Activated B cell treated with CpG ODN at 0.5 μM for 24 hours (primary cell): ENCODE measurements at regions of chr15 and their contacts with region 1.

Region 1: DNA sequence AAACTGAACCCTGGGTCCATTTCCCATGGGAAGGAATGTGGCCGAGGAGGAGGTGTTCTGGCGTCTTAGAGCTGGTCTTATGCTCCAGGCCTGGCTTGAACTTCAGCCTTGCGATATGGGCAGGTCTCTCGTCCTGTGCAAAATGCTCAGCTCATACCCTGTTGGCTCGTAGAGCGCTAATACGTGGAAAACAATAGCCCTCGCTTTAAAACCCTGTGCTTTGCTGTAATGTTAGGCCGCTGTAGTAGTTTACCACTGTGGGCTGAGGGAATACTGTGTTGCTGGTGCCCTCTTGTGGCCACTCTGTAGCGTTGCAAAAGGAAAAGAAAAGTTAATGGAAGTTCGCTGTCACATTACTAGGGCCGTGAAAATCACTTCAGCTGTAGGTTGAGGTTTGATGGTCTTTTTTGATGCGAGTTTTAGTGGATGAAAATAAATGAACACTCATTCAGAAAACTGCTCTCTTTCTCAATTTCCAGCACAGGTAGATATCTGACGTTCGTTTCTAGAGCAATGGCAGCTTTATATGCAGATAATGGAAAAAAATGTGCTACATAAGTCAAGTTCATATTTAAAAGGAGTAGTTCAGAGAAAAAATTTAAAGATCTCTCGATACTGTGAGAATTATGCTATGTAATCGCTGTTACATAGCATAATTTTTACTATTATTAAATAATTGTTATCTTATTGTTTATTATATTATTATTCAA is 92.9 kb downstream of the MCTP2 start:
- DNase-seq: peak; percentile 44
- ATAC-seq: peak; percentile 92
- H3K4me3 Mint-ChIP-seq: no peak overlapping the region
- H3K27ac Mint-ChIP-seq: peak overlapping the region; percentile 25
- H3K4me1 Mint-ChIP-seq: peaks cover 19% of the 10 kb centered on the region
- H3K27me3 Mint-ChIP-seq: no peaks in the 10 kb centered on the region
- CTCF ChIP-seq: peak; percentile 75

Region 2: GRCh38 chr15:93030430-93031105 is 1293.7 kb before region 1 on chr15:
- CTCF ChIA-PET with region 1: interaction called, 4 read pairs
- POLR2A ChIA-PET with region 1: no interaction called
- intact Hi-C with region 1: loop called (anchors 10 kb)
- DNase-seq: no peak
- ATAC-seq: peak; percentile 89
- H3K4me3 Mint-ChIP-seq: no peak overlapping the region
- H3K27ac Mint-ChIP-seq: no peak overlapping the region
- H3K4me1 Mint-ChIP-seq: peaks cover 10% of the 10 kb centered on the region
- H3K27me3 Mint-ChIP-seq: no peaks in the 10 kb centered on the region
- CTCF ChIP-seq: peak; percentile 41

Region 3: GRCh38 chr15:93997084-93997918 is 327.0 kb before region 1 on chr15:
- CTCF ChIA-PET with region 1: interaction called, 12 read pairs
- POLR2A ChIA-PET with region 1: no interaction called
- intact Hi-C with region 1: loop called (anchors 1 kb)
- DNase-seq: no peak
- ATAC-seq: no peak
- H3K4me3 Mint-ChIP-seq: no peak overlapping the region
- H3K27ac Mint-ChIP-seq: no peak overlapping the region
- H3K4me1 Mint-ChIP-seq: no peaks in the 10 kb centered on the region
- H3K27me3 Mint-ChIP-seq: no peaks in the 10 kb centered on the region
- CTCF ChIP-seq: peak; percentile 69

Region 4: GRCh38 chr15:94238539-94239118 is 85.6 kb before region 1 on chr15:
- CTCF ChIA-PET with region 1: interaction called, 66 read pairs
- POLR2A ChIA-PET with region 1: interaction called, 5 read pairs
- intact Hi-C with region 1: no loop called
- DNase-seq: no peak
- ATAC-seq: peak; percentile 83
- H3K4me3 Mint-ChIP-seq: peak overlapping the region; percentile 52
- H3K27ac Mint-ChIP-seq: peak overlapping the region; percentile 86
- H3K4me1 Mint-ChIP-seq: peaks cover 80% of the 10 kb centered on the region
- H3K27me3 Mint-ChIP-seq: no peaks in the 10 kb centered on the region
- CTCF ChIP-seq: no peak

Region 5: DNA sequence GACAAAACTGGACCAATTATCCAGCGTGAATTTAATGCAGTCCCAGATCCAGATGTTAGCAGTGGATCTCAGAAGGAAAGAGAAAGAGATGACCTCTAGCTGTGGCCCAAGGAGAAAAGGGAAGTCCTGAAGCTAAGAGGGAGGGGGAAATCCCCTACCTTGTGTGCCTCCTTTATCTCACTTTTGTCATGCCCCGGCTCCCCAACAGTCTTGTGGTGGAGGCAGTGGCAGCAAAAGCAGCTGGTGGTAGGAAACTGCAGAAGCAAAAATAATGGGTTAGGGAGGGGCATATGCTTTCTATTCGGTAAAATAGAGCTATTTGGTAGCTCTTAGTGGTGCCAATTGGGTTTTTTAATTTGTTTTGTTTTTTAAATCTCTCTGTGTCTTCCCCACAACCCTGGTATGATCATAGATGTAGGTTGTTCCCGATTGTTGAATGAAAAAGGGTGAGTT is 36.5 kb before region 1 on chr15:
- CTCF ChIA-PET with region 1: interaction called, 13 read pairs
- POLR2A ChIA-PET with region 1: interaction called, 7 read pairs
- intact Hi-C with region 1: loop called (anchors 2 kb)
- DNase-seq: peak; percentile 41
- ATAC-seq: peak; percentile 92
- H3K4me3 Mint-ChIP-seq: peak overlapping the region; percentile 80
- H3K27ac Mint-ChIP-seq: peak overlapping the region; percentile 92
- H3K4me1 Mint-ChIP-seq: peaks cover 89% of the 10 kb centered on the region
- H3K27me3 Mint-ChIP-seq: no peaks in the 10 kb centered on the region
- CTCF ChIP-seq: no peak

Region 6: DNA sequence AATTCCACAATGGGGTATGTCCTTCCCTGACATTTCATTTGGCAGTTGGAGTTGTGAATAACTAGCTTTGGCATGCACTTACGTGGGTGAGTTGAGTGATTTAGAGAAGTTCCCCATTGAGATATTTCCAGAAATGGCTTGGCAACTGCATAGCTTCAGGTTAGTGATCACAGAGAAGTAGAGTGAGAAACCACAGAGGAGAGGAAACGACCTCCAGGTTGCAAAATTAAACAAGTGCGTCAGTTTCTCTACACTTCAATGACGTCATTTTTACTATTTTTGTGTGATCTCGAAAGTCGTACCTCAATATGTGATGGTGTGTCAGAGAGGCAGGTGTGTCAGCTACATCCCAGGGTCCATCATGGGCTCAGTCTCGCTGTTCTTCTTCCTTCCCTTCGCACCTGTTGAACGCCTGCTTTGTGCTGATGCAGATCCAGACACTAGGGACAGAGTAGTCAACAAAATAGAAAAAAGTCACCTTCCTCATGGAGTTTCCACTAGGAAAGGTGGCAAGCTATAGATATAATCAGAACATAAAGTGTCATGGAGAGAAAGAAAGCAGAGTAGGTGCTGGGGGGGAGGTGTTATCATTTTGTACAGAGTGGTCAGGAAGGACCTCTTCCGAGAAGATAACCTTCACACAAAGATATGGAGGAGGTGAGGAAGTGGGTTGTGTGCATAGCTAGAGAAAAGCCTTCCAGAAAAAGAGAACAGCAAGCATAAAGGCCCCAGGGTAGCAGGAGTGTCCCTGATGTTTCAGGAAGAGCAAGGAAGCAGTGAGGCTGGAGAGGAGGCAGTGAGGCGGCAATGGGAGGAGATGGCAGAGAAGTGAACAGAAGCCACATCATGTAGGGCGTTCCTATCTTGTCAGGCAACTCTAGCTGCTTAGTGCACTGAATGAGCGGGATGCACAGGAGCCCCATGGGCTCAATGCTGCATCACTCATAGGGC is 17.3 kb before region 1 on chr15:
- CTCF ChIA-PET with region 1: interaction called, 30 read pairs
- POLR2A ChIA-PET with region 1: interaction called, 8 read pairs
- intact Hi-C with region 1: no loop called
- DNase-seq: no peak
- ATAC-seq: peak; percentile 86
- H3K4me3 Mint-ChIP-seq: peak overlapping the region; percentile 66
- H3K27ac Mint-ChIP-seq: peak overlapping the region; percentile 93
- H3K4me1 Mint-ChIP-seq: peaks cover 48% of the 10 kb centered on the region
- H3K27me3 Mint-ChIP-seq: no peaks in the 10 kb centered on the region
- CTCF ChIP-seq: no peak

Region 7: DNA sequence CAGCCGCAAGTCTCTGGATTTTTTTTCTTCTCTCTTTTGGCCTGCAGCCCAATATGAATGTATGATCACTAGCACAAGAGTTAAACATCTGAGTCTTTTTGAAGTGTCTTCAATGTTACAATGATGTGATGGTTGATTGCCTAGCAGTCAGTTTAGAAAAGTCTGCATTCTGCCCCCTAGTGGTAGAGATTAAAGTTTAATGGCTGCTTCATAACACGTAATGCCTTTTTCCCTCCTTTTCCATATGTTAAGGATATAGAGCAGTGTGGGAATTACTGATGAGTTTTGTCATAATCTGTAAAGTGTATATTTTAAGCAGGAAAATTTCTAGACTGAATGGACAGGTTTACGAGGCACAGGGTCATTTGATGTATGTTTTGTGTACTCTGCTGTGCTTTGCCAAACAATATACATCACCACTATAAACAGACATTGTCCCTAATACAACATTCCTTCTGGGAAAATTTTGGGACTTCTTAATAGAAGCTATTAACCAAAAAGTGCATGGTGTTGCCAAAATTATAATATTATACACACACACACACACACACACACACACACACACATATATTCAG is 967.7 kb after region 1 on chr15:
- CTCF ChIA-PET with region 1: no interaction called
- POLR2A ChIA-PET with region 1: no interaction called
- intact Hi-C with region 1: loop called (anchors 5 kb)
- DNase-seq: no peak
- ATAC-seq: no peak
- H3K4me3 Mint-ChIP-seq: no peak overlapping the region
- H3K27ac Mint-ChIP-seq: no peak overlapping the region
- H3K4me1 Mint-ChIP-seq: no peaks in the 10 kb centered on the region
- H3K27me3 Mint-ChIP-seq: peaks cover 2% of the 10 kb centered on the region
- CTCF ChIP-seq: no peak